ENCODE measurements at regions of chr17 and their contacts with region 1.

Region 1: GRCh38 chr17:76141212-76142038 is at the start of gene FOXJ1:
- DNase-seq: peak; percentile 98
- H3K4me3 Mint-ChIP-seq: peak within 1 kb of the TSS; percentile 83
- H3K27ac Mint-ChIP-seq: peak within 1 kb of the TSS; percentile 11
- H3K4me1 Mint-ChIP-seq: peaks cover 51% of the 10 kb centered on the region
- H3K27me3 Mint-ChIP-seq: peaks cover 13% of the 10 kb centered on the region
- total RNA-seq, gene FOXJ1: 0.07 and 0.35 TPM in 2 replicates

Region 2: GRCh38 chr17:76182016-76182764 is 40.8 kb after region 1 on chr17:
- intact Hi-C with region 1: loop called (anchors 5 kb)
- DNase-seq: peak; percentile 98
- H3K4me3 Mint-ChIP-seq: peak overlapping the region; percentile 66
- H3K27ac Mint-ChIP-seq: peak overlapping the region; percentile 92
- H3K4me1 Mint-ChIP-seq: peaks cover 53% of the 10 kb centered on the region
- H3K27me3 Mint-ChIP-seq: no peaks in the 10 kb centered on the region

Region 3: GRCh38 chr17:76278952-76279741 is 137.7 kb after region 1 on chr17:
- intact Hi-C with region 1: loop called (anchors 5 kb)
- DNase-seq: peak; percentile 96
- H3K4me3 Mint-ChIP-seq: no peak overlapping the region
- H3K27ac Mint-ChIP-seq: no peak overlapping the region
- H3K4me1 Mint-ChIP-seq: peaks cover 10% of the 10 kb centered on the region
- H3K27me3 Mint-ChIP-seq: no peaks in the 10 kb centered on the region

Measured in activated CD4-positive, alpha-beta T cell treated with anti-CD3 and anti-CD28 coated beads, Interleukin-2, amount 10 ng/mL, durations not matched to agents 24 days and 14 days (primary cell).